ENCODE measurements at regions of chr12 and their contacts with region 1.

Region 1: GRCh38 chr12:56178347-56178746 is 10.9 kb downstream of the SMARCC2 start:
- DNase-seq: no peak
- ATAC-seq: no peak
- H3K4me3 ChIP-seq: no peak overlapping the region
- H3K27ac ChIP-seq: no peak overlapping the region
- H3K4me1 ChIP-seq: no peaks in the 10 kb centered on the region
- H3K27me3 ChIP-seq: no peaks in the 10 kb centered on the region
- CTCF ChIP-seq: no peak

Region 2: GRCh38 chr12:56029666-56030293 is 148.6 kb before region 1 on chr12:
- intact Hi-C with region 1: no loop called
- DNase-seq: no peak
- ATAC-seq: peak; percentile 88
- H3K4me3 ChIP-seq: no peak overlapping the region
- H3K27ac ChIP-seq: no peak overlapping the region
- H3K4me1 ChIP-seq: peaks cover 9% of the 10 kb centered on the region
- H3K27me3 ChIP-seq: no peaks in the 10 kb centered on the region
- CTCF ChIP-seq: peak; percentile 65

Region 3: DNA sequence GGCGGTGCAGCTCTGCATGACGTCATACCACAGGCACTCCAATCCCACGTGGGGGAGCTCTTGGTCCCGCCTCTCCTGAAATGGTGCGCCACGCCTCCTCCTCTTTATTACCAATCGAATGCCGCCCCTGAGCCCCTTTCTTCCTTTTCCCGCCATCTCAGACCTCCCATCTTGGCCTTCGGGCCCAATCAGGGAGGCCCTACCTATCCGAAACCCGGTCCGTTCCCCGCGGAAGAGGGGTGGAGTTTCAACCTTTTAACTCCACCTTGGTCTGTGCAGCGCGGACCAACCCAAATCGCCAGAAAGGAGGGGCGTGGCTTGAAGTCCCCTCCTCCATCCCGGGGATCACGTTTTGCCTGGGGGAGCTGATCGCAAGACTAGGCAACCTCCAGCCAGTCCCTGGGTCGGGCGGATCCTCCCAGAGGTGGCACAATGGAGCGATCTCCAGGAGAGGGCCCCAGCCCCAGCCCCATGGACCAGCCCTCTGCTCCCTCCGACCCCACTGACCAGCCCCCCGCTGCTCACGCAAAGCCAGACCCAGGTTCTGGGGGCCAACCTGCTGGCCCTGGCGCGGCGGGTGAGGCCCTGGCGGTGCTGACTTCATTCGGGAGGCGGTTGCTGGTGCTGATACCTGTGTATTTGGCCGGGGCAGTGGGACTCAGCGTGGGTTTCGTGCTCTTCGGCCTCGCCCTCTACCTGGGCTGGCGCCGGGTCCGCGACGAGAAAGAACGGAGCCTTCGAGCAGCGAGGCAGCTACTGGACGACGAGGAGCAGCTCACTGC is 50.3 kb before region 1 on chr12 and contains the start of gene ESYT1:
- intact Hi-C with region 1: loop called (anchors 10 kb)
- DNase-seq: peak; percentile 97
- ATAC-seq: peak; percentile 93
- H3K4me3 ChIP-seq: peak within 1 kb of the TSS; percentile 77
- H3K27ac ChIP-seq: peak within 1 kb of the TSS; percentile 83
- H3K4me1 ChIP-seq: peaks cover 44% of the 10 kb centered on the region
- H3K27me3 ChIP-seq: no peaks in the 10 kb centered on the region
- CTCF ChIP-seq: no peak
- total RNA-seq, gene ESYT1: 101 TPM